ENCODE measurements at regions of chr13 and their contacts with region 1.

Region 1: DNA sequence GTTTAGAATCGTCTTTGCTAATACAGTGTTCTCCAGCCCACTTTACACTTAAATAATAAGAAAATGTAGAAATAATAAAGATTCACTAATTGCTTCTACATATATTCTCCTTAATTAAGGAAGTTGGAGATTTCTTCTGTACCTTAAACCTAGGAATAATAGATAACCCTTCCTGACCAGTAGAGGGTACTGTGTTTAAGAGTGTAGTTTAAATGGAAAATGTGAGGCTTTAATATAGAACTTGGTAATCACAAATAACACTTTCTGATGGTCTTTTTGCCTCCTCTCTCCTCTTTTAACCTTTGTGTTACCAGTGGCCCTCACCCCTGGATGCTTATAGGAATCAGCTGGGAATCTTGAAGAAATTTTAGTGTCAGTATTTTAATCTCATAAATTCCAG is 20.7 kb downstream of the POMP start:
- DNase-seq: no peak
- H3K4me3 ChIP-seq: no peak overlapping the region
- H3K27ac ChIP-seq: no peak overlapping the region
- H3K4me1 ChIP-seq: no peaks in the 10 kb centered on the region
- H3K27me3 ChIP-seq: no peaks in the 10 kb centered on the region
- CTCF ChIP-seq: peak in 1 of 3 experiments; percentile 11

Region 2: GRCh38 chr13:28792992-28793391 is 113.4 kb after region 1 on chr13:
- dilution Hi-C with region 1: loop called (anchors 25 kb)
- DNase-seq: no peak
- H3K4me3 ChIP-seq: no peak overlapping the region
- H3K27ac ChIP-seq: no peak overlapping the region
- H3K4me1 ChIP-seq: no peaks in the 10 kb centered on the region
- H3K27me3 ChIP-seq: peaks cover 2% of the 10 kb centered on the region
- CTCF ChIP-seq: no peak

Measured in keratinocyte (primary cell).